ENCODE measurements at regions of chr6 and their contacts with region 1.

Region 1: DNA sequence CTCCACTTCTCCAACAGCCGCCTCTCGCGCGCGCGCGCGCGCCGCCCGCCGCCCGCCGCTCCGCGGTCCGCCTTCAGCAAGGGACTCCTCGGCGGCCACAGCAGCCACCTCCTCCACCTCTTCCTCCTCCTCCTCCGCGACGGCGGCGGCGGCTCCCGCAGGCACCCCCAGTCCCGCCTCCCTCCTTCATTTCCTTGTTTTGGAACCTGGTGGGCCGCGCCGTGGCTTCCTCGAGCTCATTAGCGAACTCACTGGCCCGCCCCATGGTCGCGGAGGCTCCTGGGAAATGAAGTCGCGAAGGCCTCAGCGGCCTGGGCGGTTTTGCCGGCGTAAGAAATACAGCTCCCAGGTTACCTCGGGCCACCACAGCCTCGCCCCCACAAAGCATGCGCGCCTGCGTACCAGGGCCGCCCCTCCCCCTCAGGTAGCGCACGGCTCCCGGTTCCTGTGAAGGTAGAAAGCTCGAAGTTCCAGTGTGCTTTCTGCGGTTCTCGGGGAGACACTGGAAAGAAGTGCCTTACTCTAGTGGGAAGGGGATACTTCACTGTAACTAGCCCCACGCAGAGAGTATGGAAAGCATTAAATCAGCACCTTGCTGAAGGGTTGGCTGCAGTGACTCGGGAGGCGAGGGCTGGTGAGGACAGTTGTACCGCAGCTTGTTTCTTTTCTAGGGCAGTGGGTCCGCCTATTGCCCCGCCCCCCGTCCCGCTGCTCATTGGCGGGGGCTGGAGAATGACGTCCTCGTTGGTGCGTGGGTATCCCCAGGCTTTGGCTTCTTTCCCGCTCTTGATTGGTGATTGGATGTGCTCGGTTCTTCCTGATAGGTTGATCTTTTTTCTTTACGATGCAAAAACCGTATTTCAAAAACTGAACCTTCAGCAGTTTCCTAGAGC is at the start of gene CDK19:
- DNase-seq: peak; percentile 98
- H3K4me3 Mint-ChIP-seq: peak within 1 kb of the TSS; percentile 91
- H3K27ac Mint-ChIP-seq: peak within 1 kb of the TSS; percentile 91
- H3K4me1 Mint-ChIP-seq: peaks cover 17% of the 10 kb centered on the region
- H3K27me3 Mint-ChIP-seq: no peaks in the 10 kb centered on the region
- CTCF ChIP-seq: no peak
- total RNA-seq, gene CDK19: 17.7 and 24.3 TPM in 2 replicates

Region 2: GRCh38 chr6:110708295-110708950 is 107.0 kb before region 1 on chr6:
- CTCF ChIA-PET with region 1: no interaction called
- intact Hi-C with region 1: no loop called
- DNase-seq: no peak
- H3K4me3 Mint-ChIP-seq: no peak overlapping the region
- H3K27ac Mint-ChIP-seq: no peak overlapping the region
- H3K4me1 Mint-ChIP-seq: peaks cover 9% of the 10 kb centered on the region
- H3K27me3 Mint-ChIP-seq: no peaks in the 10 kb centered on the region
- CTCF ChIP-seq: no peak

Region 3: GRCh38 chr6:110746680-110747079 is 68.8 kb before region 1 on chr6:
- CTCF ChIA-PET with region 1: interaction called, 8 read pairs
- intact Hi-C with region 1: loop called (anchors 5 kb)
- DNase-seq: peak; percentile 6
- H3K4me3 Mint-ChIP-seq: peak overlapping the region; percentile 19
- H3K27ac Mint-ChIP-seq: peak overlapping the region; percentile 4
- H3K4me1 Mint-ChIP-seq: peaks cover 36% of the 10 kb centered on the region
- H3K27me3 Mint-ChIP-seq: no peaks in the 10 kb centered on the region
- CTCF ChIP-seq: no peak

Region 4: GRCh38 chr6:110890288-110890687 is 74.8 kb after region 1 on chr6:
- CTCF ChIA-PET with region 1: no interaction called
- intact Hi-C with region 1: no loop called
- DNase-seq: no peak
- H3K4me3 Mint-ChIP-seq: no peak overlapping the region
- H3K27ac Mint-ChIP-seq: no peak overlapping the region
- H3K4me1 Mint-ChIP-seq: no peaks in the 10 kb centered on the region
- H3K27me3 Mint-ChIP-seq: no peaks in the 10 kb centered on the region
- CTCF ChIP-seq: no peak

Measured in Calu3 (cell line).